ENCODE measurements at regions of chr22 and their contacts with region 1.

Region 1: GRCh38 chr22:38724926-38725571 is 19.3 kb downstream of the GTPBP1 start:
- DNase-seq: no peak
- ATAC-seq: peak; percentile 87
- H3K4me3 ChIP-seq: no peak overlapping the region
- H3K27ac ChIP-seq: no peak overlapping the region
- H3K4me1 ChIP-seq: no peaks in the 10 kb centered on the region
- H3K27me3 ChIP-seq: no peaks in the 10 kb centered on the region
- CTCF ChIP-seq: peak; percentile 35 to 48 (median 45); a peak in 5 of 6 replicates
- EP300 ChIP-seq: no peak
- POLR2A ChIP-seq: no peak
- RAD21 ChIP-seq: peak; percentile 27; the same call in 1 of the 2 replicates

Region 2: GRCh38 chr22:38705235-38706100 is 19.6 kb before region 1 on chr22 and contains the start of gene GTPBP1:
- CTCF ChIA-PET with region 1: interaction called, 10 read pairs
- POLR2A ChIA-PET with region 1: interaction called, 3 read pairs
- RAD21 ChIA-PET with region 1: interaction called, 3 read pairs
- SMC1A ChIA-PET with region 1: interaction called, 10 read pairs
- in situ Hi-C with region 1: no loop called
- intact Hi-C with region 1: no loop called
- DNase-seq: peak; percentile 100
- ATAC-seq: peak; percentile 85
- H3K4me3 ChIP-seq: peak within 1 kb of the TSS; percentile 95
- H3K27ac ChIP-seq: peak within 1 kb of the TSS; percentile 85
- H3K4me1 ChIP-seq: peaks cover 25% of the 10 kb centered on the region
- H3K27me3 ChIP-seq: no peaks in the 10 kb centered on the region
- CTCF ChIP-seq: no peak
- EP300 ChIP-seq: peak in 1 of 2 experiments; percentile 18; a peak in 1 of 4 replicates
- POLR2A ChIP-seq: peak; percentile 79
- RAD21 ChIP-seq: no peak
- polyA plus RNA-seq, gene GTPBP1: 0.89 to 1.9 TPM

Region 3: DNA sequence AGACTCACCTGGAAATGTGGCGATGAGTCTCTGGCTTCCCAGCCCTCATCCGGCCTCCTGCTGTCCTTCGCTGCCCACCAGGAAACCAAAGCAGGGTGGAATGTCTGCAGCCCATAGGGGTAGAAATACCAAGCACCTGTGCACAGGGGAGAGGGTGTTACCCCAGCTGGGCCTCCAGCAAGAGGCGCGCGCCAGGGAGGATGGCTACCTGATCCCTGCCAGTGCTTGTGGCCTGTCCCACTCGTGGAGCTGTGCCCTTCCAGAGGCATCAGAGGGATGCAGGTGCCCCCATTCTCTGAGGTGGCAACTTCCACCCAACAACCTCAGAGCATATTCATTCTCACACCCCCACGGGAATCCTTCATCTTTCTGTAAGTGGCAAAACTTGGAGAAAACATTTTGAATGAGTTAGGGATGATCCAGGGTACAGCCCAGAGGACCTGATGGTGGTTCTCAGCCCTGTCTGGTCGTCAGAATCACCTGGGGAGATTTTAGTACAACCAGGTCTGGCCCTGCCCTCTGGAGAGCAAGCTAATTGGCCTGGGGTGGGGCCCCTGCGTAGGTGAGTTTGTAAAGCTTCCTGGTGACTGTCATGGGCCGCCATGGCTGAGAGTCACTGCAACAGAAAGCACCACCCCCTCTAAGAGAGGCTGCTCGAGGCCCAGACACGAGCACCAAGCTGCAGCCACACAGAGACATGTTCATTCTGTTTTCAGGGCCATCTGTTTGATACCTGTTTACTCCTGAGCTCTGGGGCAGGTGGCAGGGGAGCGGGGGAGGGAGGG is 20.8 kb after region 1 on chr22:
- CTCF ChIA-PET with region 1: interaction called, 10 read pairs
- POLR2A ChIA-PET with region 1: no interaction called
- RAD21 ChIA-PET with region 1: no interaction called
- SMC1A ChIA-PET with region 1: no interaction called
- in situ Hi-C with region 1: no loop called
- intact Hi-C with region 1: no loop called
- DNase-seq: no peak
- ATAC-seq: no peak
- H3K4me3 ChIP-seq: no peak overlapping the region
- H3K27ac ChIP-seq: no peak overlapping the region
- H3K4me1 ChIP-seq: peaks cover 3% of the 10 kb centered on the region
- H3K27me3 ChIP-seq: no peaks in the 10 kb centered on the region
- CTCF ChIP-seq: no peak
- EP300 ChIP-seq: no peak
- POLR2A ChIP-seq: no peak
- RAD21 ChIP-seq: no peak